Activated T-helper 2 cell treated with anti-CD3 and anti-CD28 coated beads, Interferon-gamma antibody, Interleukin-2, Interleukin-4, amounts not matched to agents 10 μg/mL and 5 μg/mL and 100 μg/mL, durations not matched to agents 14 hours and 24 hours and 36 hours (primary cell): ENCODE measurements at regions of chr20 and their contacts with region 1.

Region 1: GRCh38 chr20:3710703-3711483 is 1.5 kb downstream of the SIGLEC1 start:
- DNase-seq: peak; percentile 58
- H3K4me3 Mint-ChIP-seq: no peak overlapping the region
- H3K27ac Mint-ChIP-seq: no peak overlapping the region
- H3K4me1 Mint-ChIP-seq: no peaks in the 10 kb centered on the region
- H3K27me3 Mint-ChIP-seq: peaks cover 8% of the 10 kb centered on the region

Region 2: DNA sequence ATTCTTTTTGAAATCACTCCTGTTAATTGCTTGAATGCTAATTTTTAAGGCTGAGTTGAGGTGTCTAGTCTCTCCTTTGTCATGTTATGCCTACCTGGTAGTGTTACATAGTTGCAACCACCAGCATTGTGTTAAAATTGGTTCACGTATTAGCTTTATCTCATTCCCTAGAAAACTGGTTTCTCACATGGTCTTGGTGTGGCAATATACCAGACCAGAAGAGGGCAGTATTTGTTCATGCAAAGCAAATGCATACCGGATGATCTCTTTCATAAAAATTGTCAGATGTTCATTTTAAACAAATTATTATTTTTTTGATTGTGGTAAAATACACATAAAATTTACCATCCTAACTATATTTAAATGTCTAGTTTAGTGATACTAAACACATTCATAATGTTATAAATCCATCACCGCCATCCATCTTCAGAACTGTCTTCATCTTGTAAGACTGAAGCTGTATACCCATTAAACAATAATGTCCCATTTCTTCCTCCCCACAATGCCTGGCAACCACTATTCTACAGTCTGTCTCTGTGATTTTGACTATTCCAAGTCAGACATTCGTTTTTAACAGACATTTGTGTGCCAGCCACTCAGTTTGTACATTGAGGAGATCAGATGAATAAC is 147.2 kb before region 1 on chr20:
- intact Hi-C with region 1: loop called (anchors 1 kb)
- DNase-seq: no peak
- H3K4me3 Mint-ChIP-seq: no peak overlapping the region
- H3K27ac Mint-ChIP-seq: no peak overlapping the region
- H3K4me1 Mint-ChIP-seq: no peaks in the 10 kb centered on the region
- H3K27me3 Mint-ChIP-seq: no peaks in the 10 kb centered on the region

Region 3: GRCh38 chr20:3679749-3680700 is 30.9 kb before region 1 on chr20:
- intact Hi-C with region 1: loop called (anchors 1 kb)
- DNase-seq: no peak
- H3K4me3 Mint-ChIP-seq: no peak overlapping the region
- H3K27ac Mint-ChIP-seq: no peak overlapping the region
- H3K4me1 Mint-ChIP-seq: no peaks in the 10 kb centered on the region
- H3K27me3 Mint-ChIP-seq: peaks cover 52% of the 10 kb centered on the region